ENCODE measurements at regions of chr12 and their contacts with region 1.

Region 1: GRCh38 chr12:96719660-96720363 is 187.2 kb upstream of the NEDD1 start:
- DNase-seq: peak; percentile 19
- H3K4me3 Mint-ChIP-seq: peak overlapping the region; percentile 77
- H3K27ac Mint-ChIP-seq: peak overlapping the region; percentile 80
- H3K4me1 Mint-ChIP-seq: no peaks in the 10 kb centered on the region
- H3K27me3 Mint-ChIP-seq: no peaks in the 10 kb centered on the region
- CTCF ChIP-seq: no peak

Region 2: GRCh38 chr12:96132819-96133218 is 587.0 kb before region 1 on chr12:
- CTCF ChIA-PET with region 1: no interaction called
- intact Hi-C with region 1: no loop called
- DNase-seq: peak; percentile 61
- H3K4me3 Mint-ChIP-seq: no peak overlapping the region
- H3K27ac Mint-ChIP-seq: no peak overlapping the region
- H3K4me1 Mint-ChIP-seq: peaks cover 17% of the 10 kb centered on the region
- H3K27me3 Mint-ChIP-seq: peaks cover 26% of the 10 kb centered on the region
- CTCF ChIP-seq: peak; percentile 45

Region 3: DNA sequence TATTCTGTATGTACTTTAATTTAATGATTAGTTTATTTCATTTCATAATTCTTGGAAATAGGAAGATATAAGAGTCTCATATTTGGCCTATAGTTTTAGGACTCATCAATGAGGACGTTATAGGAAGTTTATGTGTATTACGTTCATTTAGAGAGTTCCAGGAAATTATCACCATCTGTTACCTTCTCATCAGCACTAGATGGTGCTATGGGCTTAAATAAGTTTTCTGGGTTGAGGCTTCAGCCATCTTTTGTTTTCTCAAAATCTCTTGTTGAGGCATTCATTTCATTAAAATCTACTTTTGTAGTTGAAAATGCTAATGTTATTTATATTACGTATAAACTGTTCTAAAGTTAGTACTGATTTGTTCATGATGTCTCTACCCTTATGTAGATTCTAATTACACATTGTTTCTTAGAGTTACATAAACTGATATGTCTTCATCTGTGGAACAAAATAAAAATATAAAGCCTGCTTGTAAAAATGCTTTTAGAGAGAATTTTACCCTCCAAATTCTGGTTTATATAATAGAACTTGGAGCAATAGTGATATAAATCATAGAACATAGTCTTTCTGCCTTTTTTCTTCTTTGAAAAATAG is 141.2 kb before region 1 on chr12:
- CTCF ChIA-PET with region 1: no interaction called
- intact Hi-C with region 1: loop called (anchors 5 kb)
- DNase-seq: peak; percentile 20
- H3K4me3 Mint-ChIP-seq: no peak overlapping the region
- H3K27ac Mint-ChIP-seq: no peak overlapping the region
- H3K4me1 Mint-ChIP-seq: no peaks in the 10 kb centered on the region
- H3K27me3 Mint-ChIP-seq: no peaks in the 10 kb centered on the region
- CTCF ChIP-seq: peak; percentile 34

Region 4: GRCh38 chr12:96906849-96907670 is 187.2 kb after region 1 on chr12 and contains the start of gene NEDD1:
- CTCF ChIA-PET with region 1: no interaction called
- intact Hi-C with region 1: loop called (anchors 5 kb)
- DNase-seq: peak; percentile 91
- H3K4me3 Mint-ChIP-seq: peak within 1 kb of the TSS; percentile 93
- H3K27ac Mint-ChIP-seq: peak within 1 kb of the TSS; percentile 92
- H3K4me1 Mint-ChIP-seq: peaks cover 37% of the 10 kb centered on the region
- H3K27me3 Mint-ChIP-seq: no peaks in the 10 kb centered on the region
- CTCF ChIP-seq: no peak
- total RNA-seq, gene NEDD1: 47.5 and 49.0 TPM in 2 replicates

Measured in Calu3 (cell line).